ENCODE measurements at regions of chr2 and their contacts with region 1.

Region 1: GRCh38 chr2:190887089-190887488 is 6.5 kb downstream of the GLS start:
- DNase-seq: peak; percentile 31
- CTCF ChIP-seq: no peak

Region 2: GRCh38 chr2:190781604-190782198 is 105.4 kb before region 1 on chr2:
- CTCF ChIA-PET with region 1: interaction called, 11 read pairs
- POLR2A ChIA-PET with region 1: no interaction called
- DNase-seq: peak; percentile 56
- CTCF ChIP-seq: peak; percentile 44

Region 3: DNA sequence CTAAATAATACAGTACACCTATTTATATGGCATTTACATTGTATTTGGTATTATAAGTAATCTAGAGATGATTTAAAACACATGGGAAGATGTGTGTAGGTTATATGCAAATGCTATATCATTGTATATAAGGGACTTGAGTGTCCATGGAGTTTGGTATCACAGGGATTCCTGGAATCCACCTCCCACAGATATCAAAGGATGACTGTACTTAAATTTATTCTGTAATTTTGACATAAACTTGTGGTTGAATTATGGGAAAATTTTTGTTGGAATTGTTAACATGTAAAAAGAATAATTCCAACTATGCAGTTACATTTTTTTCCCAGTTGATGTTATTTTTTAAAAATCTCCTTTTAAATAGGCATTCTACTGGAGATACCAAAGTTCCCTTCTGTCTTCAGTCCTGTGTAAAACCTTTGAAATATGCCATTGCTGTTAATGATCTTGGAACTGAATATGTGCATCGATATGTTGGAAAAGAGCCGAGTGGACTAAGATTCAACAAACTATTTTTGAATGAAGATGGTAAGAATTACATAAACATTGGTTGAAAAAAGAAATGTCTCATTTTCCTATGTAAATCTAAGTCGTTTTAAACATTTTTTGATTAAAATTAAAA is 17.7 kb after region 1 on chr2:
- CTCF ChIA-PET with region 1: interaction called, 13 read pairs
- POLR2A ChIA-PET with region 1: no interaction called
- DNase-seq: no peak
- CTCF ChIP-seq: no peak

Measured in GM10248 (cell line).